ENCODE measurements at regions of chr4 and their contacts with region 1.

Region 1: DNA sequence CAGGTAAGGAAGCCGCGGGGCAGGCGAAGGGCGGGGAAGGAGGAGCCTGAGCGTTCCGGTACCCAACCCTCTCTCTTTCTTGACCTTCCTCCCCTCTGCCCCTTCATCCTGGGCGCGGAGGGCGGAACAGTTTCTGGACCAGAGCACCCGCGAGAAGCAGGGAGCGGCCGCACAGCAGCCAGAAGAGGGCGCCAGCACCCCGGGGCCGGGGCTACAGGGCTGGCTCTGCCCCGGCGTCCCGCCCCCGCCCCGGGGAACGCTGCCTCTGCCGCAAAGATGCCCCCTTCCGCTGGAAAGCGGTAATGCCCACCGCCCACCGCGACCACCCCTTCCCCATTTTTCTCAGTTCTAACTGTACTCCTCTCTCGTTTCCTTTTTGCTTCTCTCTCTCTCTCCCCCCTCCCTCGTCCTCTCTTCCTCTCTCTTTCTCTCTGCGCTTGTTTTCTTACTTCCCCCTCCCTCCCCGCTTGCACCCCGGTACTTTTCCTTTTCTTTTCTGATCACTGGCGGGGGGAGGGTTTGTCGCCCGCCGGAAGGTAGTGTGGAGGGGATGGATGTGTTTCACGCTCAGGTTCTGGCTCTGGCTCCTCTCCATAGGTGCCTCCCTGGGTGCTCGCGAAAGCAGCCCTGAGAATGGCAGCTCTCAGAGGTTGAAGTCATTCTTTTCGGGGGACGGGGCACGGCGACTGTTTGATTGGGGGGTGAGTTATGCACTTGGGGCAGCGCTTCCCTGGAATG is 13.1 kb upstream of the PRDM8 start:
- DNase-seq: peak; percentile 82 to 97 (median 92)
- ATAC-seq: peak; percentile 88
- H3K4me3 ChIP-seq: peak overlapping the region; percentile 88
- H3K4me3 Mint-ChIP-seq: peak overlapping the region; percentile 100
- H3K27ac ChIP-seq: peak overlapping the region; percentile 77 to 85
- H3K27ac Mint-ChIP-seq: peak overlapping the region; percentile 94
- H3K4me1 ChIP-seq: peaks cover 41% of the 10 kb centered on the region
- H3K4me1 Mint-ChIP-seq: peaks cover 59% of the 10 kb centered on the region
- H3K27me3 ChIP-seq: no peaks in the 10 kb centered on the region
- H3K27me3 Mint-ChIP-seq: no peaks in the 10 kb centered on the region
- CTCF ChIP-seq: peak; percentile 96

Region 2: DNA sequence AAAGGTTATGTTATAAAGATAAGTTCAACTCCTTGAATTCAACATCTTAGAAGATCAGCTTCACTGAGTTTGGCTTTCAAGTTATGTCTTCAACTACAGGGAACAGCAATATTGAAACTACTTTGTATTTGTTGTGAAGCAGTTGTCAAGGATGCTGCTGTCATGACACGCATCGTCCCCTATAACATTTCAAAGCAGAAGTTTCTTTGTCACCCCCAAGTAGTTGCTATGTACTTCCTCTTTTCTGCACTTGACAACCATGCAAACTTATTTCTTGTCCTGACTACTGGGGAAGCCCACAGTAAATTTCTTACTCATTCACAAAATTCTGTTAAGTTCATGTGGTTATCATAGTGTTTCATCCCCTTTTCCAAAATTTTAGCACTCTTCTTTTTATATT is 125.5 kb before region 1 on chr4:
- CTCF ChIA-PET with region 1: interaction called, 4 read pairs
- POLR2A ChIA-PET with region 1: interaction called, 3 read pairs
- intact Hi-C with region 1: loop called in 1 of 2 experiments (anchors 2 kb)
- DNase-seq: peak in 8 of 14 experiments; percentile 16 to 93 (median 38)
- ATAC-seq: peak; percentile 90
- H3K4me3 ChIP-seq: peak overlapping the region; percentile 19
- H3K4me3 Mint-ChIP-seq: peak overlapping the region; percentile 82
- H3K27ac ChIP-seq: peak overlapping the region; percentile 81 to 93
- H3K27ac Mint-ChIP-seq: peak overlapping the region; percentile 93
- H3K4me1 ChIP-seq: peaks cover 13% of the 10 kb centered on the region
- H3K4me1 Mint-ChIP-seq: peaks cover 45% of the 10 kb centered on the region
- H3K27me3 ChIP-seq: no peaks in the 10 kb centered on the region
- H3K27me3 Mint-ChIP-seq: no peaks in the 10 kb centered on the region
- CTCF ChIP-seq: no peak

Region 3: GRCh38 chr4:80125252-80126177 is 58.7 kb before region 1 on chr4:
- CTCF ChIA-PET with region 1: interaction called, 53 read pairs
- POLR2A ChIA-PET with region 1: interaction called, 92 read pairs
- intact Hi-C with region 1: loop called (anchors 1 kb)
- DNase-seq: peak in 13 of 14 experiments; percentile 2 to 85 (median 24)
- ATAC-seq: peak; percentile 84
- H3K4me3 ChIP-seq: no peak overlapping the region
- H3K4me3 Mint-ChIP-seq: peak overlapping the region; percentile 42
- H3K27ac ChIP-seq: peak overlapping the region; percentile 77 to 88
- H3K27ac Mint-ChIP-seq: peak overlapping the region; percentile 94
- H3K4me1 ChIP-seq: peaks cover 26% of the 10 kb centered on the region
- H3K4me1 Mint-ChIP-seq: peaks cover 54% of the 10 kb centered on the region
- H3K27me3 ChIP-seq: no peaks in the 10 kb centered on the region
- H3K27me3 Mint-ChIP-seq: no peaks in the 10 kb centered on the region
- CTCF ChIP-seq: peak; percentile 85

Region 4: DNA sequence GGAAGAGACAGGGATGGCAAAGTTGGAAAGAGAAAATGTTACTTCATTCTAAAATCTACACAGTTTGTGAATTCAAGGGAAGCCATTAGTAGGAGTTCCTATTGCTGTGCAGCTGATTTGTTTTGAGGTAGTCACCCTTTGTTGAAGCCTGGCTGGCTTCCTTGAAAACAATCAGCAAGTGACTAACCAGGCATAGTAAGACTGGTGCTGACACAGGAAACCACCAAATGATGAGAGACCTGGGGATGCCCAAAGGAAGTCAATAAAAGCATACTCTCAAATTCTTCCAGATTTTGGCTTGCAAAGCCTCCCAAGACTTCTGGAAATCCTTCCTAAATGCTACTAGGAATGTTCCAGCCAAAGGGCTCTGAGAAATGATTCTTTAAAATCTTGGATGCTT is 10.8 kb before region 1 on chr4:
- CTCF ChIA-PET with region 1: interaction called, 28 read pairs
- POLR2A ChIA-PET with region 1: interaction called, 111 read pairs
- intact Hi-C with region 1: loop called in 1 of 2 experiments (anchors 1 kb)
- DNase-seq: peak in 12 of 14 experiments; percentile 23 to 89 (median 52)
- ATAC-seq: peak; percentile 96
- H3K4me3 ChIP-seq: no peak overlapping the region
- H3K4me3 Mint-ChIP-seq: peak overlapping the region; percentile 71
- H3K27ac ChIP-seq: peak overlapping the region; percentile 62 to 89
- H3K27ac Mint-ChIP-seq: peak overlapping the region; percentile 96
- H3K4me1 ChIP-seq: peaks cover 54% of the 10 kb centered on the region
- H3K4me1 Mint-ChIP-seq: peaks cover 65% of the 10 kb centered on the region
- H3K27me3 ChIP-seq: no peaks in the 10 kb centered on the region
- H3K27me3 Mint-ChIP-seq: no peaks in the 10 kb centered on the region
- CTCF ChIP-seq: no peak

Region 5: DNA sequence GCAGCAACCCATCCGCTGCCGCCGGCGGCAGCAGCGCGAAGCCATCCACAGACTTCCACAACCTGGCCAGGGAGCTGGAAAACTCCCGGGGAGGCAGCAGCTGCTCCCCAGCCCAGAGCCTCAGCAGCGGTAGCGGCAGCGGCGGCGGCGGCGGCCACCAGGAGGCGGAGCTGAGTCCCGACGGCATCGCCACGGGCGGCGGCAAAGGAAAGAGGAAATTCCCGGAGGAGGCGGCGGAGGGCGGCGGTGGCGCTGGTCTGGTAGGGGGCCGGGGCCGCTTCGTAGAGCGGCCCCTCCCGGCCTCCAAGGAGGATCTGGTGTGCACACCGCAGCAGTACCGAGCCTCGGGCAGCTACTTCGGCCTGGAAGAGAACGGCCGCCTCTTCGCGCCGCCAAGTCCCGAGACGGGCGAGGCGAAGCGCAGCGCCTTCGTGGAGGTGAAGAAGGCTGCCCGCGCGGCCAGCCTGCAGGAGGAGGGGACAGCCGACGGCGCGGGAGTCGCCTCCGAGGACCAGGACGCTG is 18.0 kb after region 1 on chr4:
- CTCF ChIA-PET with region 1: interaction called, 15 read pairs
- POLR2A ChIA-PET with region 1: interaction called, 61 read pairs
- intact Hi-C with region 1: loop called (anchors 2 kb)
- DNase-seq: peak; percentile 59 to 90 (median 76)
- ATAC-seq: peak; percentile 64
- H3K4me3 ChIP-seq: peak overlapping the region; percentile 79
- H3K4me3 Mint-ChIP-seq: peak overlapping the region; percentile 89
- H3K27ac ChIP-seq: peak overlapping the region; percentile 53 to 61
- H3K27ac Mint-ChIP-seq: peak overlapping the region; percentile 71
- H3K4me1 ChIP-seq: peaks cover 22% of the 10 kb centered on the region
- H3K4me1 Mint-ChIP-seq: peaks cover 27% of the 10 kb centered on the region
- H3K27me3 ChIP-seq: peaks cover 6 to 7% of the 10 kb centered on the region in 2 experiments
- H3K27me3 Mint-ChIP-seq: peaks cover 11% of the 10 kb centered on the region
- CTCF ChIP-seq: peak; percentile 73

Region 6: GRCh38 chr4:80253510-80253909 is 69.3 kb after region 1 on chr4:
- CTCF ChIA-PET with region 1: no interaction called
- POLR2A ChIA-PET with region 1: no interaction called
- intact Hi-C with region 1: no loop called
- DNase-seq: no peak
- ATAC-seq: no peak
- H3K4me3 ChIP-seq: no peak overlapping the region
- H3K4me3 Mint-ChIP-seq: no peak overlapping the region
- H3K27ac ChIP-seq: no peak overlapping the region
- H3K27ac Mint-ChIP-seq: no peak overlapping the region
- H3K4me1 ChIP-seq: no peaks in the 10 kb centered on the region
- H3K4me1 Mint-ChIP-seq: no peaks in the 10 kb centered on the region
- H3K27me3 ChIP-seq: peaks cover 0 to 27% of the 10 kb centered on the region in 2 experiments
- H3K27me3 Mint-ChIP-seq: peaks cover 50% of the 10 kb centered on the region
- CTCF ChIP-seq: no peak

Region 7: DNA sequence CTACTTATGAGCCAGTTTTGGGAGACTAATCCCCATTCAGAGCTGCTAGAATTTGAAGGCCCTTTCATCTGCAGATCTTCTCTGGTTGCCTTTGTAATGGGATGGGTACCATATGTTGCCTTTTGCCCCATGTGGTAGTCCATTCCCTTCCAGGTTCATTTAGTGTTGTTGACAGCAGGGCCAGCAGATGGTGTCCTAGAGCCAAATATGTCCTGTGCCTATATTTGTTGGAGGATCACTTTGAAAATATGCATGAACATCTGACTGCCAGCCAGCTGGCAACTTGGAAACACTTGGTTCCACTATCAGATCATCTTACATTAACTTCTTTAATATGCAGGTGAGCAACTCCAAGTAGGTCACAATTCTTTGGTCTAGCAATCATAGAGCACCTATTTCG is 181.7 kb after region 1 on chr4:
- CTCF ChIA-PET with region 1: no interaction called
- POLR2A ChIA-PET with region 1: no interaction called
- intact Hi-C with region 1: no loop called
- DNase-seq: peak; percentile 31 to 75 (median 48)
- ATAC-seq: peak; percentile 79
- H3K4me3 ChIP-seq: no peak overlapping the region
- H3K4me3 Mint-ChIP-seq: no peak overlapping the region
- H3K27ac ChIP-seq: no peak overlapping the region
- H3K27ac Mint-ChIP-seq: no peak overlapping the region
- H3K4me1 ChIP-seq: peaks cover 3% of the 10 kb centered on the region
- H3K4me1 Mint-ChIP-seq: peaks cover 10% of the 10 kb centered on the region
- H3K27me3 ChIP-seq: no peaks in the 10 kb centered on the region
- H3K27me3 Mint-ChIP-seq: no peaks in the 10 kb centered on the region
- CTCF ChIP-seq: peak; percentile 73

Measured in CD4-positive, alpha-beta T cell (primary cell).